ENCODE measurements at regions of chr6 and their contacts with region 1.

Region 1: DNA sequence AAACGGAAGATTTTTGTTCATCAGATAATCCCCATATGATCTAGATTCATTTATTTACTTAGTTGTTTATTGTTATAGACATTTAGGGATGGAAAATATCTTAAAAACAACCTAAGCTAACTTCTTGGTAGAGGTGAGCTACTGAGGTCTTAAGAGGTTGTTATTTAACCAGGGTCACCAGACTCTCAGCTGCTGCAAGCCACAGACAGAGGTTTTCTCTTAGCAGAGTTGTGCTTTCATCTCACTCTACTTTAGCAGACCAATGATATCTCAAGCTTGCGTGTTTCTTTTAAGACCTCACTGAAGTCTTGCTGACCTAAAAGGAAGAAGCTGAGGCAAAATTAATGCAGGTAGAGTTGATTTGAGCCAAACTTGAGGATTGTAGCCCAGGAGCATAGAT is 43.6 kb downstream of the NCOA7 start:
- DNase-seq: no peak
- CTCF ChIP-seq: no peak

Region 2: GRCh38 chr6:125393449-125393858 is 440.9 kb before region 1 on chr6:
- CTCF ChIA-PET with region 1: no interaction called
- POLR2A ChIA-PET with region 1: no interaction called
- DNase-seq: peak; percentile 14
- CTCF ChIP-seq: no peak

Region 3: GRCh38 chr6:125773387-125774341 is 60.7 kb before region 1 on chr6:
- CTCF ChIA-PET with region 1: no interaction called
- POLR2A ChIA-PET with region 1: no interaction called
- DNase-seq: no peak
- CTCF ChIP-seq: no peak

Region 4: GRCh38 chr6:125818225-125818657 is 16.1 kb before region 1 on chr6:
- CTCF ChIA-PET with region 1: interaction called, 15 read pairs
- POLR2A ChIA-PET with region 1: no interaction called
- DNase-seq: no peak
- CTCF ChIP-seq: no peak